Heart left ventricle (tissue), 16 donors: ENCODE measurements at regions of chr9 and their contacts with region 1.

Region 1: DNA sequence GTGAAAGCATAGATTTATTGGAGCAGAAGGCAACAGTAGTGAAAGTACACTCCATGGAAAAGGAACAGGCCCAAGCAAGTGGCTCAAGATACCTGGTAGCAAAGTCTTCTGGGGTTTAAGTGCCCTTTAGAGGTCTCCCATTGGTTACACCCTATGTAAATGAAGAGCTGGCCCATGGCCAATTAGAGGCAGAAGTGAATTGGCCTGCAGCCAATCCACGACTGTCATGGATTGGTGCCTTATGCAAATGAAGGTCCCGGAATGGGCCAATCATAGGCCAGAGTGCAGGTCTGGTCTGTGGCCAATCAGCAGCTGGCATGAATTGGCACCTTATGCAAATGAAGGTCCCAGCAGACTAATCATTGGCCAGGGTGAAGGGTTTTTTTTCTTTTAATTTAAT is 64.2 kb upstream of the PCSK5 start:
- DNase-seq: peak in 1 of 5 donors; percentile 23
- ATAC-seq: no peak
- H3K4me3 ChIP-seq: no peak overlapping the region
- H3K27ac ChIP-seq: no peak overlapping the region
- H3K4me1 ChIP-seq: peaks cover 0 to 14% (median 9%) of the 10 kb centered on the region in 12 donors
- H3K27me3 ChIP-seq: no peaks in the 10 kb centered on the region
- CTCF ChIP-seq: no peak
- POLR2A ChIP-seq: no peak

Region 2: DNA sequence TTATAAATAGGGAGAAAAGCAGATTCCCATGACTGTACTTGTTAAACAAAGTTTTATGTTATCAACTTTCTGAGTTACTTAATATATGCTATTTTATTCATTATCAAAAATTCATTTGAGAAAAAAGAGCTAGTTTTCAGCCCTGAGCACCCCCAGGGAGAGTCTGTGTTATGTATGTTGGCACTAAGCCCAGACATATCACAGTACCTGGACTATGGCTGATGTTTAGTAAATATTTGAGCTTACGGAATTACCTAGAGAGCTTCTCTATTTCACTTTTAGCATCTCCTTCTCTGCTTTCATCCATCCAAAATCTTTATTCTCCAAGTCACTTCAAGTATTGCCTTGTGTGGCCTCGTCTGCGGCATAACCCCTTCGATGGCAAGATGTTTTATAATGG is 161.7 kb before region 1 on chr9:
- intact Hi-C with region 1: no loop called
- DNase-seq: no peak
- ATAC-seq: no peak
- H3K4me3 ChIP-seq: no peak overlapping the region
- H3K27ac ChIP-seq: no peak overlapping the region
- H3K4me1 ChIP-seq: peaks cover 0 to 7% (median 0%) of the 10 kb centered on the region in 12 donors
- H3K27me3 ChIP-seq: no peaks in the 10 kb centered on the region
- CTCF ChIP-seq: no peak
- POLR2A ChIP-seq: no peak

Region 3: DNA sequence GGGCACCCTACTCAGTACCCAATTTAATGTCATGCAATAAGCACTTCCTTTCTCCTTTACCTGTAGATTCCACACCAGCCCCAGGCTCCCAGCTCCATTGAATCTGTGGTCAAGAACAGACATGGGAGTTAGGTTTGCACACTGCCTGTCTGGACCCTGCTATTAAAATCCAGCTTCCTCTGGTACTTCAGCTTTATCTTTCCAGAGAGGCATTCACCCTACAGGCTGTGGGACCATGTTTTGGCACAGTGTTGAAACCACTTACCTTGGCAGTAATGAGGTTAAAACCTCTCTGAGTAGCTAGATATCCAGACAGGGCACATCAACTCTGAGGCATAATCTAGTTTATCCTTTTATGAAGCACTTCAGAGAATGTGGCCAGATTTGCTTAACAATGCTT is 127.3 kb before region 1 on chr9:
- intact Hi-C with region 1: loop called in 1 of 10 experiments (anchors 10 kb)
- DNase-seq: no peak
- ATAC-seq: peak in 3 of 4 donors; percentile 42 to 85 (median 78)
- H3K4me3 ChIP-seq: no peak overlapping the region
- H3K27ac ChIP-seq: peak overlapping the region in 8 of 12 donors; percentile 22 to 66 (median 48)
- H3K4me1 ChIP-seq: peaks cover 0 to 10% (median 4%) of the 10 kb centered on the region in 12 donors
- H3K27me3 ChIP-seq: no peaks in the 10 kb centered on the region
- CTCF ChIP-seq: no peak
- POLR2A ChIP-seq: no peak

Region 4: GRCh38 chr9:75775166-75775565 is 51.1 kb before region 1 on chr9:
- intact Hi-C with region 1: no loop called
- DNase-seq: peak in 4 of 5 donors; percentile 12 to 59 (median 34)
- ATAC-seq: peak; percentile 72 to 92 (median 86)
- H3K4me3 ChIP-seq: no peak overlapping the region
- H3K27ac ChIP-seq: peak overlapping the region in 1 of 12 donors; percentile 33
- H3K4me1 ChIP-seq: no peaks in the 10 kb centered on the region
- H3K27me3 ChIP-seq: no peaks in the 10 kb centered on the region
- CTCF ChIP-seq: no peak
- POLR2A ChIP-seq: no peak

Region 5: DNA sequence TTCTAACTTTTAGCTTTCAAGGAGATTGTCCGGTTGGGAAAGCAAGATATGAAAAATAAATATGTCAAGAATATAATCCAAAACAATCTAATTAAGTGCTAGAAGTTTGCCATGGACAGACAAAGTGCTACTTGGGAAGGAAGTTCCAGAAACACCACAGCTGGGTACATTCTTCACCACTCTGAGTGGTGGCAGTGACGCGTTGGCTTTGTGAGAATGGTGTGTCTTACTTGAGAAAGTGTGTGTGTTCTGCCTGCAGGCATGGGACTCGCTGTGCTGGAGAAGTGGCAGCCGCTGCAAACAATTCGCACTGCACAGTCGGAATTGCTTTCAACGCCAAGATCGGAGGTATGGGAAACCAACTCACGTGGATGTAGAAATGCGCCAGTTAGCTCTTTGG is 241.4 kb after region 1 on chr9:
- intact Hi-C with region 1: no loop called
- DNase-seq: no peak
- ATAC-seq: no peak
- H3K4me3 ChIP-seq: no peak overlapping the region
- H3K27ac ChIP-seq: no peak overlapping the region
- H3K4me1 ChIP-seq: no peaks in the 10 kb centered on the region
- H3K27me3 ChIP-seq: no peaks in the 10 kb centered on the region
- CTCF ChIP-seq: no peak
- POLR2A ChIP-seq: no peak